ENCODE measurements at regions of chr6 and their contacts with region 1.

Region 1: DNA sequence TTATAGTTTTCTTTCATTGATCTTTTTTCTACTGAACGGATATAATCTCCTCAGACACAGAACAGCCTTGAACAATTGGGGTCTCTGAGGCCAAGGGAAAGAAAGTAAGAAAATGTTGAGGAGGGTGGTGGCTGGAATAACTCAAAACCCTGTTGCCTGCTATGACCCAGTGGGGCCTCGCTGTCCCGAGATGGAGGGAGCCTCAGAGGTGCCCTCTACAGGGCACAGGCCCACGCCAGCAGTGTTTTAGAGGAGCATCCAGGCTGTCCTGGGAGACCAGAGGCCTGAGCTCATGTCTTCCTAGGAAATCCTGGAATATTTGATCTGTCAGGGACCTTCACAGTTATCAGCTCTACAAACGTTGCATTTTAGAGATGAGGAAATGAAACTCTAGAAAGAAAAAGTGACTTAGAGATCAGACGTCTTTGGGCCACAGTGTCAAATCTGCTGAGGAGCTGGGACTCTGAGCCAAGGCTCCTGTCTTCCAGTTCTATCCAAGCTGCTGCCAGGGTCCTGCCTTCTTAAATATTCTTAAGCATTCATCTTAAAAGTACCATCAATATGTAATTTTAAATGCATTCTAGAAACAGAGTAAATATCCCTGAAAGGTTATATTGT is 26.3 kb downstream of the ALDH5A1 start:
- DNase-seq: peak; percentile 87
- H3K4me3 Mint-ChIP-seq: no peak overlapping the region
- H3K27ac Mint-ChIP-seq: no peak overlapping the region
- H3K4me1 Mint-ChIP-seq: peaks cover 16% of the 10 kb centered on the region
- H3K27me3 Mint-ChIP-seq: no peaks in the 10 kb centered on the region
- CTCF ChIP-seq: peak; percentile 94

Region 2: DNA sequence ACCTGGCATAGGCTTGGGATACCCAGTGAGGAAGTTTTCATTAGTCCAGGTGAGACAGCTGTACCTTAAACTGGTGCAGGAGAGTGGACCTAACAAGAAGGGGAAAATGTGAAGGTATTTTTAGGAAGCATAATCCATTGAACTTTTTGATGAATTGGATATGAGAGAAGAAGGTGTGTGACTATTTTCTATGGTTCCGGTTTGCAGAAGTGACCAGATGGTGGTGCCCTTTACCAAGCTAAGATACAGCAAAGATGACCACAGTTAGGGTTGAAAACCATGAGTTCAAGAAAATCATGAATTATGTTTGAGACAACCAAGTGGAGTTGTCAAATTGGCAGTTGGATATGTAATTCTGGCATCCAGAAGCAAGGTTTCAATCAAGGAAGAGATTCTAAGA is 457.0 kb before region 1 on chr6:
- CTCF ChIA-PET with region 1: no interaction called
- intact Hi-C with region 1: loop called (anchors 1 kb)
- DNase-seq: peak; percentile 62
- H3K4me3 Mint-ChIP-seq: no peak overlapping the region
- H3K27ac Mint-ChIP-seq: no peak overlapping the region
- H3K4me1 Mint-ChIP-seq: no peaks in the 10 kb centered on the region
- H3K27me3 Mint-ChIP-seq: no peaks in the 10 kb centered on the region
- CTCF ChIP-seq: peak; percentile 53

Region 3: DNA sequence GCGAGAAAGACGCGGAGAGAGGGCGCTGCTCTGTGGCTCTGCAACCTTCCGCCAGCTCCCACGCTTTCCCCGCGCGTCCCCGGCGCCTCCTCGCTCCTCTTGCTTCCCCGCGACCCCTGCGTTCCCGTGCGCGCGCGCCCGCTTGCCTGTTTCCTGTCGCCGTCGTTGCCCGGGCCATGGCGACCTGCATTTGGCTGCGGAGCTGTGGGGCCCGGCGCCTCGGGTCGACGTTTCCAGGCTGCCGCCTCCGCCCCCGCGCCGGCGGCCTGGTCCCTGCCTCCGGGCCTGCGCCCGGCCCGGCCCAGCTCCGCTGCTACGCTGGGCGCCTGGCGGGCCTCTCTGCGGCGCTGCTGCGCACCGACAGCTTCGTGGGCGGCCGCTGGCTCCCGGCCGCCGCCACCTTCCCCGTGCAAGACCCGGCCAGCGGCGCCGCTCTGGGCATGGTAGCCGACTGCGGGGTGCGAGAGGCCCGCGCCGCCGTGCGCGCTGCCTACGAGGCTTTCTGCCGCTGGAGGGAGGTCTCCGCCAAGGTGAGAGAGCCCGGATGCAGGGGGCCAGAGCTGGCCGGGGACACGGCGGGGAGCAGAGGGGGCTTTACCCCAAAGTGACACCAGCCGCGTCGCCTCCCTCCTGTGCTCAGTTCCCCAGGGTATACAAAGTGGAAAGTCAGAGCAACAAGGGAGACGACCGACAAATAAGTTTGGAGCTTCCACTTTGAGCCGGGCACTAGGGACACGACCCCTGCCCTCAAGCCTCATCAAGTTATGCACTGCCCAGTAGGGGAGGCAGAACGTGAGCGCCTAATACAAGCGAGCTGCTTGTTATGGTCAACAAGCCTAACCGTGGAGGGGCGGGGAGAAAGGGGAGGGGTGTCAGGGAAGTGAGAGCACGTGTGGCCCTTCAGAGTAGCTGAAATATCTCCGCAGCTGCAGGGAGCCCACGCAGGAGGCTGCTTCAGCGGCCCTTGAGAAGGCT is 25.9 kb before region 1 on chr6 and contains the start of gene ALDH5A1:
- CTCF ChIA-PET with region 1: interaction called, 30 read pairs
- intact Hi-C with region 1: loop called (anchors 1 kb)
- DNase-seq: peak; percentile 85
- H3K4me3 Mint-ChIP-seq: peak within 1 kb of the TSS; percentile 84
- H3K27ac Mint-ChIP-seq: no peak within 1 kb of the TSS
- H3K4me1 Mint-ChIP-seq: peaks cover 12% of the 10 kb centered on the region
- H3K27me3 Mint-ChIP-seq: no peaks in the 10 kb centered on the region
- CTCF ChIP-seq: peak; percentile 16
- total RNA-seq, gene ALDH5A1: 22.2 and 23.2 TPM in 2 replicates

Region 4: DNA sequence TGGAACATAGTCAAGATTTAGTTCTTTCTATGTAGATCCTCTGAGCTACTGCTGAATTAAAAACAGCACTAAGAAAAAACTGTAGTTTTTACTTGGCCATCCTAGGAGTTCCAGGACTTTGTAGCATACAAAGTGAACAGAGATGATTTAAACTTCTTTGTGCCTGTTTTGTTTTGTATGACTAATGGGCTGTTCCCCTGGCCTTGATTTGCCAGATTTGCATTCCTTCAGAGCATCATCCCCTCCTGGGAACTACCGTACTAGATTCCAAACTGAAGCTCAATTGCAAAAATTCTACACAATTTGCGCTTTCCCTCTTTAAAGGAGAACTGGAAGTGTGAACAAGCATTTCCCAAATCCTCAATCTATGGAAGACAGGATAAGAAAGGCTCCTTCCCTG is 168.9 kb after region 1 on chr6:
- CTCF ChIA-PET with region 1: no interaction called
- intact Hi-C with region 1: loop called (anchors 1 kb)
- DNase-seq: no peak
- H3K4me3 Mint-ChIP-seq: no peak overlapping the region
- H3K27ac Mint-ChIP-seq: no peak overlapping the region
- H3K4me1 Mint-ChIP-seq: peaks cover 17% of the 10 kb centered on the region
- H3K27me3 Mint-ChIP-seq: no peaks in the 10 kb centered on the region
- CTCF ChIP-seq: no peak

Region 5: DNA sequence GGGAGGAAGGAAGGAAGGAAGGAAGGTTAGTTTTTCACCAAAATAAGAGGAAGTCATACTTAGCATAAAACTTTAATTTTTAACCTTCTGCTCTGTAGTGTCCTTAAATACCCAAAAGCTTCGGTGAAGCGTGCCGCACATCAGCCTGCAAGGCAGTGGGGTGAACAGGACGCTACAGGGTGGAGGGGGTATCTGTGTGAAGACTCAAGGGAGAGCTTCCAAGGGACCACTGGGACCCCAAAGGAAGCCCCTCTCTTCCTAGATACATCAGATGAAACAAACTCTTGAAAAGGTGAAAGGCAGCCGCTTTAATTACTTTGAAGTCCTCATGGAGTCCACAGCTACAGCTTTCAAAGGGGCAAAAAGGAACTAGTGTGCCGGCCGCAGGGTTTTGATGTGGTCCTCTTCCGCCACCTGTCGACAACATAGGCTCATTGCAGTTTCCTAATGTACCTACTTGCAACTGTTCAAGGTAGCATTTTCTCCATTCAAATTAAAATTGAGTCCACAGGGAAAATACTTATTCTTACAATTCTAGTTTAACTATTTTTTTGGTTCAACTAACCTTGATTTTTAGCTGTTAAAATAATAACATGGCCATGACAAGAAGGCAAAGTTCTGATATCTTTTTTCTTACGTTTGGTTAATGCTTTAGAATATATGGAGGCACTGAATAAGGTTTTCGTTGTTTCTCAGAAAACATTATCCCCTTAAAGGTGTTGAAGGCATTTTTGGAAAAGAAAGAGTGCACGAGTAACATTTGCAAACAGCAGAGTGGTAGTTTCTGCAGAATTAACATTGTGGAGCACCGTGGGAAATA is 549.7 kb after region 1 on chr6:
- CTCF ChIA-PET with region 1: no interaction called
- intact Hi-C with region 1: loop called (anchors 2 kb)
- DNase-seq: peak; percentile 94
- H3K4me3 Mint-ChIP-seq: no peak overlapping the region
- H3K27ac Mint-ChIP-seq: no peak overlapping the region
- H3K4me1 Mint-ChIP-seq: no peaks in the 10 kb centered on the region
- H3K27me3 Mint-ChIP-seq: peaks cover 27% of the 10 kb centered on the region
- CTCF ChIP-seq: peak; percentile 100